Activated CD4-positive, alpha-beta memory T cell treated with anti-CD3 and anti-CD28 coated beads for 36 hours (primary cell): ENCODE measurements at regions of chr22 and their contacts with region 1.

Region 1: DNA sequence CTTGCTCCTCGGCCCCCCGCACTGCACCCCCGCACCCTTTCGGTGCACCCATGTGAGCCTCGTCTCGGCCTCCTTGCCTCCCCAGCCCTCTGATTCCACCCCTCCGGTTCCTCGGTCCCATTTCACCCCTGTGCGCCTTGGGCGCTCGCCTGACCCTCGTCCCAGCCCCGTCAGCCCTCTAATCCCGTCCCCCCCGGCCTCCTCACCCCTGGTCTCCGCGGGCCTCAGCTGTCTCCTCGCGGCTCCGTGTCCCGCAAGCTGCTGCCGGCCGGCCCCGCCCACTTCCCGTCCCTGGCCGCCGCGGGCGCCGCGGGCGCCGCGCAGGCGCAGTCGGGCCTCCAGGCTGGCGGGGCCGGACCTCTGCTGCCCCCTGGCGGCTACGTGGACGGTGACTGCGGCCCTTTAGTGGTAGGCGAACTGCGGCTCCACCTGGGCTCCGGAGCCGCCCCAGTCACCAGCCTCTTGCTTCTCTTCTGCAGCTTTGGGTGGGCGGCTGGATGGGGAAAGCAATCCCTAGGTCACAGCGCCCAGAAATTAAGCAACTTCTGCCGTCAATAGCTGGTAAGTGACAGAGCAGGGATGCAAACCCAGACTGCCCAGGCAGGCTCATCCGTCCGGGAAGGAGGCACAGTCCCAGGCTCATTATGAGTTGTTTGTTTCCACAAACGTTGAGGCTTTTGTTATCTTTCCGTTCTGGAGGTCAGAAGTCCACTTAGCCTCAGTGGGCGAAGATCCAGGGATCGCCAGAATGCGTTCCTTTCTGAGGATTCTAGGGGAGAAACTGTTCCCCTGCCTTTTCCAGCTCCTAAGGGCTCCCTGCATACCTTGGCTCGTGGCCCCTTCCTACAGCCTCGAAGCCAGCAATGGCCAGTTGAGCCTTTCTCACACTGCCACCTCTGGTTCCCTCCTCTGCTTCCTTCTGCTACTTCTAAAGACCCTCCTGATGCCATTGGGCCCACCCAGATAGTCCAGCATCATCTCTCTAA is at the start of gene PPM1F:
- DNase-seq: peak; percentile 93
- H3K4me3 Mint-ChIP-seq: peak within 1 kb of the TSS; percentile 83
- H3K27ac Mint-ChIP-seq: no peak within 1 kb of the TSS
- H3K4me1 Mint-ChIP-seq: peaks cover 10% of the 10 kb centered on the region
- H3K27me3 Mint-ChIP-seq: no peaks in the 10 kb centered on the region
- total RNA-seq, gene PPM1F: 21.7 to 21.9 TPM

Region 2: GRCh38 chr22:21719024-21719423 is 233.9 kb before region 1 on chr22:
- CTCF ChIA-PET with region 1: interaction called, 12 read pairs
- POLR2A ChIA-PET with region 1: no interaction called
- intact Hi-C with region 1: no loop called
- DNase-seq: no peak
- H3K4me3 Mint-ChIP-seq: no peak overlapping the region
- H3K27ac Mint-ChIP-seq: no peak overlapping the region
- H3K4me1 Mint-ChIP-seq: no peaks in the 10 kb centered on the region
- H3K27me3 Mint-ChIP-seq: no peaks in the 10 kb centered on the region

Region 3: GRCh38 chr22:21867528-21868266 is 85.2 kb before region 1 on chr22 and contains the start of gene MAPK1:
- CTCF ChIA-PET with region 1: interaction called, 3 read pairs
- POLR2A ChIA-PET with region 1: no interaction called
- intact Hi-C with region 1: loop called (anchors 5 kb)
- DNase-seq: peak; percentile 96
- H3K4me3 Mint-ChIP-seq: peak within 1 kb of the TSS; percentile 87
- H3K27ac Mint-ChIP-seq: peak within 1 kb of the TSS; percentile 98
- H3K4me1 Mint-ChIP-seq: peaks cover 37% of the 10 kb centered on the region
- H3K27me3 Mint-ChIP-seq: peaks cover 9% of the 10 kb centered on the region
- total RNA-seq, gene MAPK1: 70.2 to 75.6 TPM

Region 4: DNA sequence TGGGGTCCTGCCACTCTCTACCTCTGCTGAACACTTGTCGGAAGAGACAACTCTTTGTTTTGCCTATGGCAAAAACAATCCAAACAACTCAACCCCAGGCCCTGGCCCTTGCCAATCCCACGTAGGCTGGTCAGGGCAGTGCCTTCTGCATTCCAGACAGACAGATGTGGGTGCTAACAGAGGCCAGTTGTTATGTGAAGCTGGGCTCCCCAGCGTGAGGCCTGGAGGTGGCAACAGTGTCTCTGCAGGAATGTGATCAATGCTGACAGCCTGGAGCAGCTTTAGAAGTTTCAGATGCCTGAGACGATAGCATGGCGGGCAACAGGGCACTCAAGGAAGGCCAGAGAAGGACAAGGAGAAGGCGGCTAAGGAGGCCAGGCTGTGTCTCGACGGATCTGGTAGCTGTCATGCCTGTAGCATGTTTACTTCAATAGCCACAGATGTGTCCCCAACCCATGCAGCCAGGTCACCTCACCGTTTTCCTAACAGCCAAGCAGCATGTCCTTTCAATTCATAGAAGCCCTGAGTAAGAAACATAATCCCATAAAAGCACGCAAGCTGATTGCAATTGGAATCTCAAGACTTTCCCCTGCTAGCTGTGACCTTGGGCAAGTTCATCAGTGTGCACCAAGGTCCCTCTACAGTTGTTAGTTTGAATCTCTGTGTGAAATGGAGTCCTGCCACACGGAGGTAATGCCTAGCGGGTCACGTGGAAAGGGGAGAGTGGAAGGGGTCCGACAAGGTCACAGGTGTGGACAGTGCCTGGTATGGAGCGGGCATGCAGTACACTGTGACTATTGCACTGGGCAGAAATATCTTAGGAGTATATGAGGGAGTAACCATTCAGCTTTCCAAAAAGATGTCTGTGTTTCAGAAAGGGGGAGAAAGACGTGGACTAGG is 14.0 kb after region 1 on chr22:
- CTCF ChIA-PET with region 1: interaction called, 20 read pairs
- POLR2A ChIA-PET with region 1: no interaction called
- intact Hi-C with region 1: no loop called
- DNase-seq: no peak
- H3K4me3 Mint-ChIP-seq: no peak overlapping the region
- H3K27ac Mint-ChIP-seq: no peak overlapping the region
- H3K4me1 Mint-ChIP-seq: no peaks in the 10 kb centered on the region
- H3K27me3 Mint-ChIP-seq: no peaks in the 10 kb centered on the region

Region 5: DNA sequence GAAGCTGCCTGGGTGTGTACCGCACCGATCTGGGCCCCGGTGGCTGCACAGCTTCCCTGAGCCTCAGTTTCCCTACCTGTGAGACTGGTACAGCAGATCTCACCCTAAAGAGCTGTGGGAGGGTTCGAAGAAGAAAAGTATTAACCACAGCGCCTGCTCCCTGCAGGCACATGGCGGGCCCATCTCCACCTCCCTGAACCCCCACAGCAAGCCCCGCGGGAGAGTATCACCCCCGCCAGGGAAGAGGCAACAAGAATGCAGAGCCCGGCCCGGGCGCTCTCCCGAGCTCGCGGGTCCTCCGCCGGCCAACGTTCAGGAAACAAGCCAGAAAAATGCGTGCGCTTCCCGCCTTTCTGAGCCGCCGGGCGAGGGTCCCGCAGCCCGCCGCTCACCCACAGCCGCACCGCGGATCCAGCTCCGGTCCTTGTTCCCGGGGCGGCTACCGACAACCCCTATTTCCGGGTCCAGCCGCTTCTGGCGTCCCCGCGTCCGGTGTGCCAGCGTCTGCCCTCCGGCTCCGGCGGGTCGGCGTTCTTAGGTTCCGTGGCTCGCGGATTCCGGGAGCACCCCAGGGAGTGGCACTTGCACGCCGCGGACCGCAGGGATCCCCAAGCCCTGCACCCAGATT is 29.6 kb after region 1 on chr22 and contains the start of gene TOP3B:
- CTCF ChIA-PET with region 1: interaction called, 17 read pairs
- POLR2A ChIA-PET with region 1: no interaction called
- intact Hi-C with region 1: no loop called
- DNase-seq: peak; percentile 90
- H3K4me3 Mint-ChIP-seq: peak within 1 kb of the TSS; percentile 89
- H3K27ac Mint-ChIP-seq: peak within 1 kb of the TSS; percentile 77
- H3K4me1 Mint-ChIP-seq: peaks cover 32% of the 10 kb centered on the region
- H3K27me3 Mint-ChIP-seq: no peaks in the 10 kb centered on the region
- total RNA-seq, gene TOP3B: 28.8 to 30.4 TPM